Activated CD8-positive, alpha-beta memory T cell treated with anti-CD3 and anti-CD28 coated beads, Interleukin-2, amount 10 ng/mL, durations not matched to agents 7 days and 5 days (primary cell): ENCODE measurements at regions of chr1 and their contacts with region 1.

Region 1: GRCh38 chr1:226201029-226201593 is 14.6 kb upstream of the ACBD3 start:
- DNase-seq: no peak
- ATAC-seq: no peak
- H3K4me3 Mint-ChIP-seq: no peak overlapping the region
- H3K27ac Mint-ChIP-seq: no peak overlapping the region
- H3K4me1 Mint-ChIP-seq: no peaks in the 10 kb centered on the region
- H3K27me3 Mint-ChIP-seq: peaks cover 16% of the 10 kb centered on the region

Region 2: DNA sequence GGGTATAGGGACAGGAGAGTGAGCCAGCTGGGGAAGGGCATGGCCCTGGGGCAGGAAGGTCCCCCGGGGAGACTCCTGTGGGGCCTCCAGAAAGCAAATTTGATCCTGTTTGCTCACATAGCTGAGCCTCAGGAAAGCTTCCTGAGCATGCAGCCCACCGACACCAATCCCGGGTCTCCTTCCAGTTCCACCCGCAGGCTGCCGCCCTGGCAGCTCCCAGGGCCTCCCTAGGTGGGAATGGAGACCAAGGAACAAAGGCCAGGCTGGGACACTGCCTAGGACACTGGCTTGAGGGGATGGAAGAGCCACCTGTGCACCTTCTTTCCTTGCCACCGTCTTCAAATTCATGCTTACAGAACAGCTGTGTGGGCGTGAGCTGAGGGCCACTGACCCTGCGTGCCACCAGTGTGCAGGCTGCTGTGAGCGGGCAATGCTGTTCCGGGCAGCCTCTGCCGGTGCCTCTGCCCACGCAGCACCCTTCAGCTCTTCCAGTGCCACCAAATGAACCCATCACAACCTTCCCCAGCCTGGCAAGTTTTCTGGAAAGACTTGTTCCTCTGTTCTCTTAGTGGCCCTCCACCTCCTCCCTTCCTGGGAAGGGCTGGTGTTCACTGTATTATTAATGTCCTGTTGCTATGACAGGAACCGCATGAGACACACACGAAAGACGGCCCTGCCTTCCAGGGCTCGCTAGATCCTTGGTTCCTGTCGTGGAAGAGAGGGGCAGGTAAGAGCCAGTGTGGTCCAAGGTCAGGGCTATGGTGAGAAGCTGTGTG is 68.2 kb before region 1 on chr1:
- CTCF ChIA-PET with region 1: interaction called, 19 read pairs
- DNase-seq: peak; percentile 37
- ATAC-seq: no peak
- H3K4me3 Mint-ChIP-seq: no peak overlapping the region
- H3K27ac Mint-ChIP-seq: no peak overlapping the region
- H3K4me1 Mint-ChIP-seq: peaks cover 4% of the 10 kb centered on the region
- H3K27me3 Mint-ChIP-seq: no peaks in the 10 kb centered on the region

Region 3: DNA sequence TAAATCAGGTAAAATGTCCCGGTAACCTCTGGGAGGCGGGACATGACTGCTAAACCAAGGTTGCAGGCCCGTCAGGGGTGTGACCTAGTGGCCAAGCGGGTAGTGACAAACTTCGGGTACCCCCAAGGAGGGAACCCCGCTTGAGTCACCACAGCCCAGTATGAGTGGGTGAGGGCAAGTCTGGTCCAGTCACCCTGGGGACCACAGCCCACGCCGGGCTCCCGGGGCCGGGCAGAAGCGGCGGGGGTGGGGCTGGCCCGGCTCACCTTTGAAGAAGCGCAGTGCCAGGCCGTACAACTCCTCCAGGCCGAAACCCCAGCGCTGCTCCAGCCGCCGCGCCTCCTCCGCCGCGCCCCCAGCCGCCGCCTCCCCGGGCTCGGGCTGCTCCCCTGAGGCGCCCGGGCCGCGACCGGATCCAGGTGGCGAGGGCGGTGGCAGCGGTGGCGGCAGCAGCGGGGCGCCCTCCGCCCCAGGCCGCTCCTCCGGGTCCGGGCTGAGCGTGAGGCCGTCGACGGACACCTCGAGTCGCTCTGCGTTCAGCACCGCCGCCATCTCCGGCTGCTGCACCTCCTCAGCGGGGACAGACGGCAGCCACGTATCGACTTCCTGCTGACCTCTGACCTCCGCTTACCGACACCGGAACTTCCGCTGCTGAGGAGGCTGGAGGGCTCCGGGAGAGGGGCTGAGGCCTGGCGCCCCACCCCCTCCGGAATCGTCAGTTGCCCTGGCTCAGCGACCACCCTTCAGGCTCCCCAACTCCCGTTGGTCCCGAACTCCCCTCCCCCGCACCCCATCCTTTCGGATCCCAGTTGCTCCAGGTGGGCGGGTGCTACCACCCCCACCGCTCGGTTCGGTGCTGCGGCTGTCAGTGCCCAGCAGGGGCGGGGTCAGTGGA is 14.7 kb before region 1 on chr1 and contains the start of gene ACBD3:
- CTCF ChIA-PET with region 1: interaction called, 18 read pairs
- DNase-seq: peak; percentile 93
- ATAC-seq: peak; percentile 97
- H3K4me3 Mint-ChIP-seq: peak within 1 kb of the TSS; percentile 97
- H3K27ac Mint-ChIP-seq: peak within 1 kb of the TSS; percentile 93
- H3K4me1 Mint-ChIP-seq: peaks cover 32% of the 10 kb centered on the region
- H3K27me3 Mint-ChIP-seq: no peaks in the 10 kb centered on the region
- total RNA-seq, gene ACBD3: 19.4 to 20.0 TPM

Region 4: GRCh38 chr1:226332947-226333346 is 131.8 kb after region 1 on chr1:
- CTCF ChIA-PET with region 1: interaction called, 15 read pairs
- DNase-seq: no peak
- ATAC-seq: no peak
- H3K4me3 Mint-ChIP-seq: peak overlapping the region; percentile 59
- H3K27ac Mint-ChIP-seq: peak overlapping the region; percentile 29
- H3K4me1 Mint-ChIP-seq: peaks cover 20% of the 10 kb centered on the region
- H3K27me3 Mint-ChIP-seq: peaks cover 3% of the 10 kb centered on the region